Ascending aorta (tissue), 2 donors: ENCODE measurements at regions of chr2 and their contacts with region 1.

Region 1: GRCh38 chr2:69514406-69514805 is 77.2 kb upstream of the NFU1 start:
- DNase-seq: peak in 1 of 2 donors; percentile 69
- H3K4me3 ChIP-seq: no peak overlapping the region
- H3K27ac ChIP-seq: peak overlapping the region in 1 of 2 donors; percentile 28
- H3K4me1 ChIP-seq: peaks cover 0 to 10% of the 10 kb centered on the region in 2 donors
- H3K27me3 ChIP-seq: no peaks in the 10 kb centered on the region
- CTCF ChIP-seq: no peak

Region 2: DNA sequence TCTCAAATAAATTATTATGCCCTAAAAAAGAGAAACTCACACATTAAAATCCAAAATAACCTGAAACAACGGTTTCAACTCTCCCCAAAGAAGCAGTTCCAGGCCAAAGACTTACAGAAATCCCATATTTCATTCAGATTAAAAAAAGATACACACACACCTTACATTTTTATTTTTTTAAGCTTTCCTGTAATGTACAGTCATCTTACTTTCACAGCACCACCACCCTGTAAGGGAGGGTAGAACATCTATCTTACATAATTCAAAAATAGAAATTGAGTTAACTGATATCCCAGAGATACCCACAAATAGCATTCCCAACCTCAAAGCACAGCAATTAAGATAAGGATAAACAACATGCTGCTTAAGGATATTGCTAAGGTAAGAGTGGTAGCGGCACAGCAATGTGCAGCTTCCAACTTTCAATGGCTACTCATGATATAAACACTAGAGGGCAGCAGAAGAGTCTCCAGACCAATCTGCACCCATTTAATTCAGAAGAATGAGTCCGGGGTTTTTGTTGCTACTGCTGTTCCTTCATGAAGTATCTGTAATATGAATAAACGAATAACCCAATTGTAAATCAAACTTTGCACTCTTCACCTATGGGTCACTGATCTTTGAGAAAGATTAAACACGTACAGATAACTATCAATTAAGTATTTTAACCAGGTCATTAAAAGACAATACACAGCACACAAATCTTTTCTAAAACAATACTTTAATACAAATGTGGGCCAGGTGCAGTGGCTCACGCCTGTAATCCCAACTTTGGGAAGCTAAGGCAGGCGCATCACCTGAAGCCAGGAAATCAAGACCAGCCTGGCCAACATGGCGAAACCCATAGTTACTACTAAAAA is 138.7 kb before region 1 on chr2:
- intact Hi-C with region 1: loop called (anchors 10 kb)
- DNase-seq: no peak
- H3K4me3 ChIP-seq: no peak overlapping the region
- H3K27ac ChIP-seq: no peak overlapping the region
- H3K4me1 ChIP-seq: no peaks in the 10 kb centered on the region
- H3K27me3 ChIP-seq: no peaks in the 10 kb centered on the region
- CTCF ChIP-seq: peak; percentile 53 to 61 (median 57)